B cell (primary cell): ENCODE measurements at regions of chr22 and their contacts with region 1.

Region 1: GRCh38 chr22:41697126-41697775 is 2.1 kb upstream of the MEI1 start:
- DNase-seq: peak; percentile 91
- ATAC-seq: peak; percentile 87
- H3K4me3 ChIP-seq: peak overlapping the region in 1 of 5 experiments; percentile 10
- H3K4me3 Mint-ChIP-seq: peak overlapping the region; percentile 78
- H3K27ac ChIP-seq: peak overlapping the region in 1 of 2 donors; percentile 18
- H3K27ac Mint-ChIP-seq: peak overlapping the region; percentile 88
- H3K4me1 ChIP-seq: peaks cover 8 to 18% of the 10 kb centered on the region in 2 donors
- H3K4me1 Mint-ChIP-seq: peaks cover 9% of the 10 kb centered on the region
- H3K27me3 ChIP-seq: no peaks in the 10 kb centered on the region
- H3K27me3 Mint-ChIP-seq: no peaks in the 10 kb centered on the region
- CTCF ChIP-seq: peak; percentile 96

Region 2: DNA sequence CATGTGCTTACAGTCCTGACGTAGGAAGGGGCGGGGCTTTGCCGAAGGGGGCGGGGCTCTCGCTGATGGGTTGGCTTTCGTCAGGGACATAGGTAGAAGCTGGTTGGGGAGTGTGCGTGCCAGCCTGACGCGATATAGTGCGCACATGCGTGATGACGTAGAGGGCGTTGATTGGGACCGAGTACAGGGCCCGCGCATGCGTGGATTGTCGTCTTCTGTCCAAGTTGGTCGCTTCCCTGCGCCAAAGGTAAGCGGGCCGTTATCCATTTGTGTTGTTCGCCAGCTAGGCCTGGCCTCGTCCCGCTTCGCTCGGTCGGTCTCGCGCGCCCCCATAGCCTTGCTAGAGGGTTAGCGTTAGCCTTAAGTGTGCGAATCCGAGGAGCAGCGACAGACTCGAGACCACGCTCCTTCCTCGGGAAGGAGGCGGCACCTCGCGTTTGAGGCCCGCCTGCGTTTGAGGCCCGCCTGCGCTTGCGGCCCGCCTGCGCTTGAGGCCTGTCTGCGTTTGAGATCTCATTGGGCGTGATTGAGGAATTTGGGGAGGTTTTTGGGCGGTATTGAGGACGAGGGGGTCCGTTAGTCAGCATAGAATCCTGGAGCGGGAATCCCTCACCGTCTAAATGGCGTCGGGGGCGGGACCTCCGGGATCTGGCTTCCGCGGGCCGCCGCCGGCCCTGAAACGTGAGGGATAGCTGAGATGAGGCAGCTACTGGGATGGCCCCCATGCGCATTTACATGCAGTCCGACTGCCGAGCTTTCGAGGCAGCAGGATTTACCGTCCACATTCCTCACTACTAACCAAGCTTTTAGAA is 75.9 kb before region 1 on chr22 and contains the start of gene XRCC6:
- CTCF ChIA-PET with region 1: interaction called, 4 read pairs
- POLR2A ChIA-PET with region 1: no interaction called
- intact Hi-C with region 1: loop called (anchors 2 kb)
- DNase-seq: peak; percentile 100
- ATAC-seq: peak; percentile 96
- H3K4me3 ChIP-seq: peak within 1 kb of the TSS; percentile 68 to 97 (median 89)
- H3K4me3 Mint-ChIP-seq: peak within 1 kb of the TSS; percentile 96
- H3K27ac ChIP-seq: peak within 1 kb of the TSS; percentile 95 to 96
- H3K27ac Mint-ChIP-seq: peak within 1 kb of the TSS; percentile 94
- H3K4me1 ChIP-seq: peaks cover 19 to 27% of the 10 kb centered on the region in 2 donors
- H3K4me1 Mint-ChIP-seq: peaks cover 39% of the 10 kb centered on the region
- H3K27me3 ChIP-seq: no peaks in the 10 kb centered on the region
- H3K27me3 Mint-ChIP-seq: no peaks in the 10 kb centered on the region
- CTCF ChIP-seq: no peak
- total RNA-seq, gene XRCC6: 176 and 180 TPM in 2 replicates

Region 3: DNA sequence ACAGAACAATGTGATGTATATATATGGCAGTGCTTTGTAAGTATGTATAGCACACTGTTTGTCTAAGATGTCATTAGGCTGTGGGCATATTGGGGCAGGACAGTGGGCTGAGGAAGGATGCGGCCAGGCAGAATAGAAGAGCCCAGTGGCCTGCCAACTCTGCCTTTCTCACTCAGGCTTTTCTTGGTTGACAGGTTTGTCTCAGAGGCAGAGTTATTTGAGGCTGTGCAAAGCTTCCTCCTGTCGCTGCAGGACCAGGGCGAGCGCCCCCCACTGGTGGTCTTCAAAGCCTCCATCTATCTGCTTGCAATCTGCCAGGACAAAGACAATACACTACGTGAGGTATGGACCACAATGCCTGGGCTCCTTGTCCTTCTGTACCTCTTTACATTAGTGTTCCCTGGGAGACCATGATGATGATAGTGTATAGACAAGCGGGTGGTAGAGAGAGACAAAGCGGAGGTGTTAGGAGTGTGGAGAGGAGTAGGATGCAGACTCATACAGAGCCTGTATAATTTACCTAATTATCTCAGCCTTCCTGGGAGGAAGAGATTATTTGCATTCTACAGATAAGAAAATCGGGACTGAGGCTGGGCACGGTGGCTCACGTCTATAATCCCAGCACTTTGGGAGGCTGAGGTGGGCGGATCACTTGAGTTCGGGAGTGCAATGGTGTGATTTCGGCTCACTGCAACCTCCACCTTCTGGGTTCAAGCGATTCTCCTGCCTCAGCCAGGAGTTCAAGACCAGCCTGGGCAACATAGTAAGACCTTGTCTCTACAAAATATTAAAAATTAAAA is 65.9 kb after region 1 on chr22:
- CTCF ChIA-PET with region 1: interaction called, 44 read pairs
- POLR2A ChIA-PET with region 1: interaction called, 4 read pairs
- intact Hi-C with region 1: no loop called
- DNase-seq: peak; percentile 60
- ATAC-seq: peak; percentile 47
- H3K4me3 ChIP-seq: no peak overlapping the region
- H3K4me3 Mint-ChIP-seq: no peak overlapping the region
- H3K27ac ChIP-seq: no peak overlapping the region
- H3K27ac Mint-ChIP-seq: no peak overlapping the region
- H3K4me1 ChIP-seq: no peaks in the 10 kb centered on the region
- H3K4me1 Mint-ChIP-seq: peaks cover 6% of the 10 kb centered on the region
- H3K27me3 ChIP-seq: no peaks in the 10 kb centered on the region
- H3K27me3 Mint-ChIP-seq: no peaks in the 10 kb centered on the region
- CTCF ChIP-seq: peak; percentile 68

Region 4: DNA sequence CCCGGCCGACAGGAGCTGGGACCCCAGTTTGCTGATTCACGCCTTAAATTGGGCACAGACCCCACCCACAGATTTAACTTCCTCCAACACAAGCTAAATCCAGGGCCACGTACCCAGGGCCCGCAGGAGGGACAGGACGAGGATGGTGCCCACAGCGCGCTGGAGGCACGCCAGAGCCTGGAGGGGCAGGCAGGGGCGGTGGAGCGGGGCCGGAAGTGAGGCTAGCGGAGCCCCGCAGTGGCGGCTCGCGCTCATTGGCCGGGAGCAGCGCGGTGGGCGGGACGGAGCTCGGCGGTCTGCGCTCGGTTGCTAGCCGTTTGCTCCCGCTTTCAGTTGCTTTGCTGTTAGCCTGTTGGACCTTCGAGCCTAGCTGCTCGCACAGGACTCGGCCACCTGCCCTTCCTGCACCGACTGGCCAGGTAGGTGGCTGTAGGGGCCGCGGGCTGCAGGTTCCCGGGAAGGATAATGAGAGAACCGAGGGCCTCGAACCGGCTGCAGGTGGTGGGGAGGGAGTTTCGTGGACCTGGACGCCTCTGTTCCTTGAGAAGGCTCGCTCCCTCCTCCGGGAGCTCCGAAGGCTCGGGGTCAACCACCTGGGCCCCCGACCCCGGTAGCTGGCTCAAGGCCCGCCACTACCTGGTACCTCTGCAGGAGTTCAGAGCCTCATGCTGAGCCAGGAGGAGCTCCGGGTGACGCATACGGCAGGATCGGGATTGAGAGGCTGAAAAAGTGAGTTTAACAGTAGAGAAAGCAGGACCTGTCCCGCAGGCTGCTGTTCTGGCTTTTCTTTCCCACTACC is 103.3 kb after region 1 on chr22 and contains the start of gene CCDC134:
- CTCF ChIA-PET with region 1: interaction called, 56 read pairs
- POLR2A ChIA-PET with region 1: interaction called, 9 read pairs
- intact Hi-C with region 1: loop called (anchors 1 kb)
- DNase-seq: peak; percentile 91
- ATAC-seq: peak; percentile 98
- H3K4me3 ChIP-seq: peak within 1 kb of the TSS; percentile 65 to 98 (median 96)
- H3K4me3 Mint-ChIP-seq: peak within 1 kb of the TSS; percentile 98
- H3K27ac ChIP-seq: peak within 1 kb of the TSS; percentile 90 to 91
- H3K27ac Mint-ChIP-seq: peak within 1 kb of the TSS; percentile 99
- H3K4me1 ChIP-seq: peaks cover 19 to 22% of the 10 kb centered on the region in 2 donors
- H3K4me1 Mint-ChIP-seq: peaks cover 24% of the 10 kb centered on the region
- H3K27me3 ChIP-seq: no peaks in the 10 kb centered on the region
- H3K27me3 Mint-ChIP-seq: no peaks in the 10 kb centered on the region
- CTCF ChIP-seq: no peak
- total RNA-seq, gene CCDC134: 17.4 and 18.1 TPM in 2 replicates

Region 5: DNA sequence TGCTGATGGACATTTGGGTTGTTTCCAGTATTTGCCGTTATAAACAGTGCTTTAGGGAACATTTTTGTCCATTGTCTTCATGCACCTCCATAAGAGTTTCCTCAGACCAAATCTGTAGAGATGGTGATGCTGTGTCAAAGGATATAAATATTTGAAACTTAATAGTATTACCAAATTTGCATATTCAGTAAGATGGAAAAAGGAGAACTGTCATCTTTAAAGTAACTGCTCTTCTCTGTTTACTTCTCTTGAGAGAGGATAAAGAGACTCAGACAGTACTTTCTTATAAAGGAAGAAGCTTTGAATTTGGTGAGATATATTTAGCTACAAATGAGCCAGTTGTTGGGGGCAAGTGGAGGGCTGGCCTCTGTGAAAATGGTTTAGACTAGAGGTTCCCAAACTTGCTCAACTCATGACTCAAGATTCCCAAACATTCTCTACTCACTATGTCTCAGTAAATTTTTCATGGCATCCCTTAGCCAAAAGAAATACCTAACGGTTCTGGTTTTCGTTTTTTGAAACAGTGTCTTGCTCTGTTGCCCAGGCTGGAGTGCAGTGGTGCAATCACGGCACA is 191.5 kb after region 1 on chr22:
- CTCF ChIA-PET with region 1: interaction called, 11 read pairs
- POLR2A ChIA-PET with region 1: no interaction called
- intact Hi-C with region 1: no loop called
- DNase-seq: no peak
- ATAC-seq: peak; percentile 12
- H3K4me3 ChIP-seq: peak overlapping the region in 1 of 5 experiments; percentile 2
- H3K4me3 Mint-ChIP-seq: peak overlapping the region; percentile 56
- H3K27ac ChIP-seq: peak overlapping the region; percentile 56 to 71
- H3K27ac Mint-ChIP-seq: peak overlapping the region; percentile 90
- H3K4me1 ChIP-seq: peaks cover 21 to 35% of the 10 kb centered on the region in 2 donors
- H3K4me1 Mint-ChIP-seq: peaks cover 62% of the 10 kb centered on the region
- H3K27me3 ChIP-seq: no peaks in the 10 kb centered on the region
- H3K27me3 Mint-ChIP-seq: no peaks in the 10 kb centered on the region
- CTCF ChIP-seq: no peak

Region 6: DNA sequence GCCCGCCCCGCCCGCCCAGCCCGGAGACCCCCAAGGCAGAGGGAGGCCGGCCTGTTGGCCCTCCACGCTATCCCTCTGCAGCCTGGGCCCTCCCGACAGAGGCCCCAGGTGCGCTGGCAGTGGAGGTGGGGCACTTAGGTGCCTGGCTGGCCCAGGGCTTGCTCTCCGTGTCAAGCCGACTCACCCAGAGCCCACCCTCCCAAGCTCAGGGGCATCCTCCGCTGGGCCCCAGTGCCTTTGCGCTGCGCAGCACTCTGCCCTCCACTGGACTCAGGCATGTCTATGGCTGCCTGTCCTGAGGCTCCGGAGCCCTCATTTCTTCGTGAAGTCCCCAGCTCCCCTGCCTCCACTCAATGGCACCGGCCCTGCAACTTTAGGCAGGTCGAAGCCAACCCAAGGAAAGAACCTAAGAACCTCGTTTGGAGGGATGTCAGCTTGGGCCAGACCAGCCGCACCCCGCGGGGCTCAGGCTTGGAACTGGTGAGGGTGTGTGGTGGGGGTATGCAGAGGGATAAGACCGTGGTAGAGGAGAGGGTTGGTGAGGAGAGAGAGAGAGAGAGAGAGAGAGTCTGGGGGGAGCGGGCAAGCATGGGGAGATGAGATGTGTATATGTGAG is 260.8 kb after region 1 on chr22:
- CTCF ChIA-PET with region 1: interaction called, 53 read pairs
- POLR2A ChIA-PET with region 1: no interaction called
- intact Hi-C with region 1: loop called (anchors 1 kb)
- DNase-seq: no peak
- ATAC-seq: peak; percentile 28
- H3K4me3 ChIP-seq: peak overlapping the region in 1 of 5 experiments; percentile 19
- H3K4me3 Mint-ChIP-seq: peak overlapping the region; percentile 26
- H3K27ac ChIP-seq: no peak overlapping the region
- H3K27ac Mint-ChIP-seq: no peak overlapping the region
- H3K4me1 ChIP-seq: peaks cover 11 to 22% of the 10 kb centered on the region in 2 donors
- H3K4me1 Mint-ChIP-seq: peaks cover 21% of the 10 kb centered on the region
- H3K27me3 ChIP-seq: no peaks in the 10 kb centered on the region
- H3K27me3 Mint-ChIP-seq: no peaks in the 10 kb centered on the region
- CTCF ChIP-seq: peak; percentile 44